Testis (tissue), 5 donors: ENCODE measurements at regions of chr17 and their contacts with region 1.

Region 1: DNA sequence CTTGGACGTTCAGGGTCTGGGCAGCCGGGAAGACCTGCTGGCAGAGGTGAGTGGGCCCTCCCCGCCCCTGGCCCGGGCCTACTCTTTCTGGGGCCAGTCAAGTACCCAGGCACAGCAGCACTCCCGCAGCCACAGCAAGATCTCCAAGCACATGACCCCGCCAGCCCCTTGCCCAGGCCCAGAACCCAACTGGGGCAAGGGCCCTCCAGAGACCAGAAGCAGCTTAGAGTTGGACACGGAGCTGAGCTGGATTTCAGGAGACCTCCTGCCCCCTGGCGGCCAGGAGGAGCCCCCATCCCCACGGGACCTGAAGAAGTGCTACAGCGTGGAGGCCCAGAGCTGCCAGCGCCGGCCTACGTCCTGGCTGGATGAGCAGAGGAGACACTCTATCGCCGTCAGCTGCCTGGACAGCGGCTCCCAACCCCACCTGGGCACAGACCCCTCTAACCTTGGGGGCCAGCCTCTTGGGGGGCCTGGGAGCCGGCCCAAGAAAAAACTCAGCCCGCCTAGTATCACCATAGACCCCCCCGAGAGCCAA is 8.6 kb upstream of the ABCC3 start:
- DNase-seq: peak; percentile 86
- H3K4me3 ChIP-seq: no peak overlapping the region
- H3K27ac ChIP-seq: no peak overlapping the region
- H3K4me1 ChIP-seq: peaks cover 7% of the 10 kb centered on the region
- H3K27me3 ChIP-seq: no peaks in the 10 kb centered on the region
- CTCF ChIP-seq: peak; percentile 69 to 86 (median 70)
- POLR2A ChIP-seq: no peak

Region 2: GRCh38 chr17:50559674-50560184 is 66.4 kb before region 1 on chr17:
- intact Hi-C with region 1: loop called (anchors 5 kb)
- DNase-seq: peak; percentile 79
- H3K4me3 ChIP-seq: peak overlapping the region; percentile 43 to 48
- H3K27ac ChIP-seq: no peak overlapping the region
- H3K4me1 ChIP-seq: peaks cover 29% of the 10 kb centered on the region
- H3K27me3 ChIP-seq: no peaks in the 10 kb centered on the region
- CTCF ChIP-seq: no peak
- POLR2A ChIP-seq: no peak

Region 3: DNA sequence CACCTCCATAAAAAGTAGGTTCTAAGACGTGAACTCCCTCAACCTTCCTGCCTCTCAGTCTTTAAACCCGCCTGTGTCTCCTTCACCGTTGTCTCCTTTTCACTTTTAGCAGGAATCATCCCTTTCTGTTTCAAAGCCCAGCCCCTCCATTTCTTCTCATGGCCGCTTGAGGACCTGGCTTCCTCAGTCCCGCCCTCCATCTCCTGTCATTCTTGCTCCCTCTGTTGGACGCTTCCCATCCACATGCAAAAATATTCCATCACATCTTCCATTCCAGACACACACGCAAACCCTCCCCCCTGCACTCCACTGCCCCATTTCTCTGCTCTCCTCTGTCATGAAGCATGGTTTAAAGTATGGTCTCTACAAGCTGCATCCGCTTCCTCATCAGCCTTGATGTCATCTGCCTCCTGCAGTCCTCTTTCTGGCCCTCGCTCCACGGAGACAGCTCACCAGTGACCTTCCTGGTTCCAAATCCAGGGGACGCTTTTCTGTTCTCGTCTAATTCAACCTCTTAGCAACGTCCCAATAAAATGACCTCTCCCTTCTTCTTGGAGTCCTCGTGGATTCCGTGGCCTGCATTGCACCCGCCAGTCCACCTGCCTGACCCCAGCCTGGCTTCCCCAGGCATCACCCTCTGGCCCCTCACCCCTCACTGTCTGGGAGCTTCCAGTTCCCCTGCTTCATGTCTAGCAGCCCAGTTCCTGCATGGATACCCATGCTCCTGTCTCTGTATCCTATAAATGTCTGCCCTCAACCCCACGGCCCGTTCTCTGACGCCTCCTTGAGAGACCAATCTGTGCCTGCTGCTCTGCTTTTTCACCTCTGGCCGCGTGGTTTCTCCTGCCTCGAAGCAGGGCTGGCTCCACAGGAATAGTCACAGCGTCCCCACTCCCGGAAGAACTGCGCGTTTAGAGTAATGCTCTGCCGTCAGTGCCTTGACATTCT is 55.4 kb after region 1 on chr17:
- intact Hi-C with region 1: loop called (anchors 10 kb)
- DNase-seq: peak; percentile 81
- H3K4me3 ChIP-seq: no peak overlapping the region
- H3K27ac ChIP-seq: no peak overlapping the region
- H3K4me1 ChIP-seq: peaks cover 10% of the 10 kb centered on the region
- H3K27me3 ChIP-seq: no peaks in the 10 kb centered on the region
- CTCF ChIP-seq: peak; percentile 30 to 61 (median 47)
- POLR2A ChIP-seq: no peak

Region 4: GRCh38 chr17:50697062-50697461 is 71.0 kb after region 1 on chr17:
- intact Hi-C with region 1: no loop called
- DNase-seq: no peak
- H3K4me3 ChIP-seq: no peak overlapping the region
- H3K27ac ChIP-seq: no peak overlapping the region
- H3K4me1 ChIP-seq: no peaks in the 10 kb centered on the region
- H3K27me3 ChIP-seq: no peaks in the 10 kb centered on the region
- CTCF ChIP-seq: no peak
- POLR2A ChIP-seq: no peak